ENCODE measurements at regions of chr21 and their contacts with region 1.

Region 1: GRCh38 chr21:29298348-29299045 is at the start of gene BACH1:
- DNase-seq: no peak
- ATAC-seq: peak; percentile 61
- H3K4me3 ChIP-seq: peak within 1 kb of the TSS; percentile 93
- H3K27ac ChIP-seq: peak within 1 kb of the TSS; percentile 96
- H3K4me1 ChIP-seq: peaks cover 31% of the 10 kb centered on the region
- H3K27me3 ChIP-seq: no peaks in the 10 kb centered on the region
- CTCF ChIP-seq: peak; percentile 32 to 59 (median 41); a peak in 5 of 6 replicates
- EP300 ChIP-seq: no peak
- POLR2A ChIP-seq: peak; percentile 98
- RAD21 ChIP-seq: peak; percentile 59
- polyA plus RNA-seq, gene BACH1: 3.2 to 3.3 TPM

Region 2: GRCh38 chr21:29078869-29079767 is 219.4 kb before region 1 on chr21:
- CTCF ChIA-PET with region 1: interaction called, 19 read pairs
- POLR2A ChIA-PET with region 1: interaction called, 68 read pairs
- RAD21 ChIA-PET with region 1: interaction called, 64 read pairs
- SMC1A ChIA-PET with region 1: interaction called, 17 read pairs
- in situ Hi-C with region 1: no loop called
- intact Hi-C with region 1: loop called (anchors 2 kb)
- DNase-seq: peak; percentile 68
- ATAC-seq: peak; percentile 69
- H3K4me3 ChIP-seq: peak overlapping the region; percentile 41; the same call in 1 of the 2 replicates
- H3K27ac ChIP-seq: peak overlapping the region; percentile 60
- H3K4me1 ChIP-seq: peaks cover 16% of the 10 kb centered on the region
- H3K27me3 ChIP-seq: no peaks in the 10 kb centered on the region
- CTCF ChIP-seq: no peak
- EP300 ChIP-seq: 0 out of 4 replicates have a peak, but pooled peaks of 1 of the 2 experiments have one; percentile 34
- POLR2A ChIP-seq: no peak
- RAD21 ChIP-seq: no peak

Region 3: DNA sequence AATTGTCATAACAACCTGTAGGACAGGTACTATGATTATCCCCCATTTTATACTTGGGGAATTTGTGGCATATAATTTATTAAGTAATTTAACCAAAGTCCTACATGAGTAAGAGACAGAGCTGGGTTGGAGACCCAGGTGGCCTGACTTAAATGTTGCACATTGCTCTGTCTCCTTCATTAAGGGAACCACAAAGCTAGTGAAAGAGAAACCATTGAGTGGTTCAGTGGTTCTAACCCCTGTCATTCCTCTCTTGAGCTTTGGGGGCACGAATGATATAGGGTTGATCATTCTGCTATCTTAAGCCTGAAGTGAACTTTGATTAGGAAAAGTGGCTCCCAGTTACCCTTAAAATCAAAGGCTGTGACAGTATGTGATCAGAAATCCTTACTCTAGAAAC is 173.3 kb before region 1 on chr21:
- CTCF ChIA-PET with region 1: interaction called, 8 read pairs
- POLR2A ChIA-PET with region 1: interaction called, 6 read pairs
- RAD21 ChIA-PET with region 1: interaction called, 16 read pairs
- SMC1A ChIA-PET with region 1: interaction called, 20 read pairs
- in situ Hi-C with region 1: no loop called
- intact Hi-C with region 1: loop called (anchors 5 kb)
- DNase-seq: peak; percentile 71
- ATAC-seq: peak; percentile 94
- H3K4me3 ChIP-seq: peak overlapping the region; percentile 43
- H3K27ac ChIP-seq: peak overlapping the region; percentile 80
- H3K4me1 ChIP-seq: peaks cover 28% of the 10 kb centered on the region
- H3K27me3 ChIP-seq: no peaks in the 10 kb centered on the region
- CTCF ChIP-seq: peak in 2 of 3 experiments; percentile 16 to 26; a peak in 2 of 6 replicates
- EP300 ChIP-seq: peak in 1 of 2 experiments; percentile 43; a peak in 1 of 4 replicates
- POLR2A ChIP-seq: no peak
- RAD21 ChIP-seq: peak; percentile 32; the same call in 1 of the 2 replicates

Region 4: GRCh38 chr21:29221253-29221744 is 77.2 kb before region 1 on chr21:
- CTCF ChIA-PET with region 1: interaction called, 5 read pairs
- POLR2A ChIA-PET with region 1: no interaction called
- RAD21 ChIA-PET with region 1: interaction called, 9 read pairs
- SMC1A ChIA-PET with region 1: interaction called, 13 read pairs
- in situ Hi-C with region 1: no loop called
- intact Hi-C with region 1: no loop called
- DNase-seq: no peak
- ATAC-seq: no peak
- H3K4me3 ChIP-seq: no peak overlapping the region
- H3K27ac ChIP-seq: no peak overlapping the region
- H3K4me1 ChIP-seq: peaks cover 5% of the 10 kb centered on the region
- H3K27me3 ChIP-seq: no peaks in the 10 kb centered on the region
- CTCF ChIP-seq: no peak
- EP300 ChIP-seq: no peak
- POLR2A ChIP-seq: no peak
- RAD21 ChIP-seq: no peak

Region 5: GRCh38 chr21:29318354-29318753 is 19.9 kb after region 1 on chr21:
- CTCF ChIA-PET with region 1: interaction called, 7 read pairs
- POLR2A ChIA-PET with region 1: interaction called, 41 read pairs
- RAD21 ChIA-PET with region 1: interaction called, 42 read pairs
- SMC1A ChIA-PET with region 1: interaction called, 85 read pairs
- in situ Hi-C with region 1: no loop called
- intact Hi-C with region 1: no loop called
- DNase-seq: no peak
- ATAC-seq: no peak; the same call in 2 of the 3 replicates
- H3K4me3 ChIP-seq: no peak overlapping the region
- H3K27ac ChIP-seq: no peak overlapping the region
- H3K4me1 ChIP-seq: no peaks in the 10 kb centered on the region
- H3K27me3 ChIP-seq: no peaks in the 10 kb centered on the region
- CTCF ChIP-seq: no peak
- EP300 ChIP-seq: no peak
- POLR2A ChIP-seq: no peak
- RAD21 ChIP-seq: no peak

Region 6: GRCh38 chr21:29372063-29372802 is 73.7 kb after region 1 on chr21:
- CTCF ChIA-PET with region 1: interaction called, 24 read pairs
- POLR2A ChIA-PET with region 1: interaction called, 6 read pairs
- RAD21 ChIA-PET with region 1: interaction called, 43 read pairs
- SMC1A ChIA-PET with region 1: interaction called, 21 read pairs
- in situ Hi-C with region 1: no loop called
- intact Hi-C with region 1: loop called (anchors 2 kb)
- DNase-seq: peak; percentile 59
- ATAC-seq: peak; percentile 95
- H3K4me3 ChIP-seq: no peak overlapping the region
- H3K27ac ChIP-seq: no peak overlapping the region
- H3K4me1 ChIP-seq: no peaks in the 10 kb centered on the region
- H3K27me3 ChIP-seq: no peaks in the 10 kb centered on the region
- CTCF ChIP-seq: peak; percentile 57 to 86 (median 65); a peak in 4 of 6 replicates
- EP300 ChIP-seq: no peak
- POLR2A ChIP-seq: no peak
- RAD21 ChIP-seq: peak; percentile 93